ENCODE measurements at regions of chr10 and their contacts with region 1.

Region 1: GRCh38 chr10:21525367-21526183 is at the start of gene SKIDA1:
- DNase-seq: peak; percentile 86
- ATAC-seq: peak; percentile 73
- H3K4me3 ChIP-seq: peak within 1 kb of the TSS; percentile 62
- H3K27ac ChIP-seq: peak within 1 kb of the TSS; percentile 98
- H3K4me1 ChIP-seq: peaks cover 3% of the 10 kb centered on the region; the same call in 1 of the 2 replicates
- H3K27me3 ChIP-seq: no peaks in the 10 kb centered on the region
- CTCF ChIP-seq: no peak
- POLR2A ChIP-seq: no peak
- RAD21 ChIP-seq: no peak
- total RNA-seq, gene SKIDA1: 0.56 and 0.72 TPM in 2 replicates

Region 2: GRCh38 chr10:21464143-21464533 is 61.4 kb before region 1 on chr10:
- CTCF ChIA-PET with region 1: no interaction called
- POLR2A ChIA-PET with region 1: interaction called, 12 read pairs
- dilution Hi-C with region 1: no loop called
- in situ Hi-C with region 1: no loop called
- intact Hi-C with region 1: no loop called
- DNase-seq: no peak
- ATAC-seq: no peak
- H3K4me3 ChIP-seq: no peak overlapping the region
- H3K27ac ChIP-seq: no peak overlapping the region
- H3K4me1 ChIP-seq: no peaks in the 10 kb centered on the region
- H3K27me3 ChIP-seq: no peaks in the 10 kb centered on the region
- CTCF ChIP-seq: no peak
- POLR2A ChIP-seq: no peak
- RAD21 ChIP-seq: no peak

Region 3: DNA sequence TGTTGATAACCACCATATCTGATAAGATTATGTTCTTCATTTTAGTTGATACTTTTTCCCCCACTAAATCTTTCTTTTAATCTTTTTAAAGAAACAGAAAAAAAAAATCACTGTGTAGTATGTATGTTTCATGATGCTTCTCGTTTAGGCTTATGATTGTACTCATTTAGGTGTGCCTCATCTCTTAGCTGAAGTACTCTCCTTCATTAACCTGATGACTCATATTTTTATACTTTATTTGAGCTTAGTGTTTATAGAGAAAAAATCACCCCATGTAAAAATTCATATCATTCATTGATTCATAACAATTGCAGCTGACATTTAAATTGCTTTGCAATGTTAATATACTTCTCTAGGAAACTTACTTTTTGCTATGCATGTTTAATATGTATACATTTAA is 167.3 kb after region 1 on chr10:
- CTCF ChIA-PET with region 1: no interaction called
- POLR2A ChIA-PET with region 1: interaction called, 11 read pairs
- dilution Hi-C with region 1: no loop called
- in situ Hi-C with region 1: no loop called
- intact Hi-C with region 1: no loop called
- DNase-seq: no peak
- ATAC-seq: peak; percentile 11; the same call in 1 of the 2 replicates
- H3K4me3 ChIP-seq: no peak overlapping the region
- H3K27ac ChIP-seq: no peak overlapping the region
- H3K4me1 ChIP-seq: no peaks in the 10 kb centered on the region
- H3K27me3 ChIP-seq: no peaks in the 10 kb centered on the region
- CTCF ChIP-seq: no peak
- POLR2A ChIP-seq: no peak
- RAD21 ChIP-seq: no peak